ENCODE measurements at regions of chr1 and their contacts with region 1.

Region 1: GRCh38 chr1:107750358-107750959 is 214.5 kb downstream of the VAV3 start:
- DNase-seq: no peak
- H3K4me3 ChIP-seq: no peak overlapping the region
- H3K27ac ChIP-seq: no peak overlapping the region
- H3K4me1 ChIP-seq: peaks cover 0 to 6% (median 2%) of the 10 kb centered on the region in 4 donors
- H3K27me3 ChIP-seq: no peaks in the 10 kb centered on the region
- CTCF ChIP-seq: peak; percentile 66 to 72 (median 67)
- EP300 ChIP-seq: no peak
- POLR2A ChIP-seq: no peak

Region 2: GRCh38 chr1:107277022-107277421 is 473.4 kb before region 1 on chr1:
- intact Hi-C with region 1: loop called (anchors 2 kb)
- DNase-seq: no peak
- H3K4me3 ChIP-seq: no peak overlapping the region
- H3K27ac ChIP-seq: no peak overlapping the region
- H3K4me1 ChIP-seq: no peaks in the 10 kb centered on the region
- H3K27me3 ChIP-seq: no peaks in the 10 kb centered on the region
- CTCF ChIP-seq: peak; percentile 44 to 52 (median 49)
- EP300 ChIP-seq: no peak
- POLR2A ChIP-seq: no peak

Region 3: DNA sequence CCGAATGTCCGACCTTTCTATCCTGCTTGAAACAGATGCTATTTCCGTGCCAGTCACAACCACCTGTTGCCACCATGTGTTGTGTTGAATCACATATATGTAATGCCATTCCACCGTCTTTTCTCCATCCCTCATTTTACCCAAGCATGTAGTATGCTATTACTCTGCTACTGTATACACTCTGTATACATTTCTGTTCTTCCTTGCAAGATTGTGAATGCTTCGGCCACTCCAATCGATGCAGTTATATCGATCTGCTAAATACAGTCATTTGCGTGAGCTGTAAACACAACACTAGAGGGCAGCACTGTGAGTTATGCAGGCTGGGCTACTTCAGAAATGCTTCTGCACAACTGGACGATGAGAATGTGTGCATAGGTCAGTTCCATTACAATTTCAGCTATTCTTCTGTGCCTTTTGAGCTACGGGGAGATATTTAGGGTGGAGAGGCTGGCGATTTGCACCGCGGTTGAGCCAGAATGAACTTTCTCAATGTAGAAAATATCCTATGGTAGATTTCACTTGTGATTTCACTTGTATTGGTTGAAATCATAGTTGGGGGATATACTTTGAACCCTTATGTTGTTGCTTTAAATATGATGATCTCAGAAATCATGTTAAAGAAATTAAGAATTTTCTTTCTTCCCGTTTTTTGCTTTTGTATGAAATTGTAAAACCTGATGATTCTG is 319.8 kb before region 1 on chr1:
- intact Hi-C with region 1: loop called (anchors 5 kb)
- DNase-seq: no peak
- H3K4me3 ChIP-seq: no peak overlapping the region
- H3K27ac ChIP-seq: no peak overlapping the region
- H3K4me1 ChIP-seq: no peaks in the 10 kb centered on the region
- H3K27me3 ChIP-seq: no peaks in the 10 kb centered on the region
- CTCF ChIP-seq: peak; percentile 35 to 55 (median 40)
- EP300 ChIP-seq: no peak
- POLR2A ChIP-seq: no peak

Region 4: GRCh38 chr1:107529502-107530149 is 220.8 kb before region 1 on chr1:
- intact Hi-C with region 1: loop called (anchors 10 kb)
- DNase-seq: no peak
- H3K4me3 ChIP-seq: no peak overlapping the region
- H3K27ac ChIP-seq: no peak overlapping the region
- H3K4me1 ChIP-seq: peaks cover 0 to 27% (median 2%) of the 10 kb centered on the region in 4 donors
- H3K27me3 ChIP-seq: no peaks in the 10 kb centered on the region
- CTCF ChIP-seq: peak; percentile 66 to 74 (median 66)
- EP300 ChIP-seq: no peak
- POLR2A ChIP-seq: no peak